Cardiac septum (tissue), 1 donor: ENCODE measurements at regions of chr19 and their contacts with region 1.

Region 1: GRCh38 chr19:38658462-38659306 is 11.2 kb downstream of the ACTN4 start:
- DNase-seq: no peak

Region 2: GRCh38 chr19:38718747-38719543 is 60.3 kb after region 1 on chr19:
- intact Hi-C with region 1: loop called (anchors 2 kb)
- DNase-seq: peak; percentile 88